ENCODE measurements at regions of chr11 and their contacts with region 1.

Region 1: DNA sequence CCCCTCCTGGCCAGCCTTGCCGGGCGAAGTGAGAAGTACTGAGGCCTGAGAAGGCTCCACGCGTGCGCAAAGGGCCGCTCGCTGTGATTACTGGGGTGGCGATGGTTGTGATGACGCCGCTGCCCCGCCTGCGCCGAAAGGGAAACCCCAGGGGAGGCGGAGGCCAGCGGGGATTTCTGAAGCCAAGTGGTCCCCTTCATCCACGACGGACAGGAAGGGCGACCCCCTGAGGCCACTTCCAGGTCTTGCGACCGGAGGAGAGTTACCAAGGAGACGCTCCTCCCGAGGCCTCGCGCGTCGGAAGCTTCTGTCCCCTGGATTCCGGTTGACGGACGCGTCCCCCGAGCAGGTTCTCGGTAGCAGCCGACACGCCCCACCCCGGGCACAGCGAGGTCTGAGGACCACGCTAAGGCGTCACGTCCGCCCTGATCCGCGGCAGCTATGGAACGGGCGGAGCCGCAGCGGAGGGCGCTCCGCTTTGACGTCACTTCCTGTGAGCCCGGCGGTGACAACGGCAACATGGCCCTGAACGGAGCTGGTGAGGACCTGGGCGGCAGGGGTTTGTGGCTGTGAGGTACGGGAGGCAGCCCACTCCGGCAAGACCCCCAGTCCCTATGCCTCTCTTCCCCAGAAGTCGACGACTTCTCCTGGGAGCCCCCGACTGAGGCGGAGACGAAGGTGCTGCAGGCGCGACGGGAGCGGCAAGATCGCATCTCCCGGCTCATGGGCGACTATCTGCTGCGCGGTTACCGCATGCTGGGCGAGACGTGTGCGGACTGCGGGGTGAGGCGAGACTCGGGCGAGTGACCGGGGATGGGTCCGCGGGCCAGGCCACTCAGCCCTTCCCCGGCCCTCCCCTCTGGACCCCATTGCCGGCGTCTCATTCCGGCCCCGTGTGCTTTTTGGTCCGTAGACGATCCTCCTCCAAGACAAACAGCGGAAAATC is at the start of gene ZNRD2:
- DNase-seq: peak; percentile 99
- H3K4me3 ChIP-seq: peak within 1 kb of the TSS; percentile 60 to 97 (median 91)
- H3K27ac ChIP-seq: peak within 1 kb of the TSS; percentile 81
- H3K4me1 ChIP-seq: peaks cover 56% of the 10 kb centered on the region
- H3K27me3 ChIP-seq: no peaks in the 10 kb centered on the region
- CTCF ChIP-seq: peak; percentile 47 to 48
- total RNA-seq, gene ZNRD2: 35.2 to 52.8 TPM

Region 2: DNA sequence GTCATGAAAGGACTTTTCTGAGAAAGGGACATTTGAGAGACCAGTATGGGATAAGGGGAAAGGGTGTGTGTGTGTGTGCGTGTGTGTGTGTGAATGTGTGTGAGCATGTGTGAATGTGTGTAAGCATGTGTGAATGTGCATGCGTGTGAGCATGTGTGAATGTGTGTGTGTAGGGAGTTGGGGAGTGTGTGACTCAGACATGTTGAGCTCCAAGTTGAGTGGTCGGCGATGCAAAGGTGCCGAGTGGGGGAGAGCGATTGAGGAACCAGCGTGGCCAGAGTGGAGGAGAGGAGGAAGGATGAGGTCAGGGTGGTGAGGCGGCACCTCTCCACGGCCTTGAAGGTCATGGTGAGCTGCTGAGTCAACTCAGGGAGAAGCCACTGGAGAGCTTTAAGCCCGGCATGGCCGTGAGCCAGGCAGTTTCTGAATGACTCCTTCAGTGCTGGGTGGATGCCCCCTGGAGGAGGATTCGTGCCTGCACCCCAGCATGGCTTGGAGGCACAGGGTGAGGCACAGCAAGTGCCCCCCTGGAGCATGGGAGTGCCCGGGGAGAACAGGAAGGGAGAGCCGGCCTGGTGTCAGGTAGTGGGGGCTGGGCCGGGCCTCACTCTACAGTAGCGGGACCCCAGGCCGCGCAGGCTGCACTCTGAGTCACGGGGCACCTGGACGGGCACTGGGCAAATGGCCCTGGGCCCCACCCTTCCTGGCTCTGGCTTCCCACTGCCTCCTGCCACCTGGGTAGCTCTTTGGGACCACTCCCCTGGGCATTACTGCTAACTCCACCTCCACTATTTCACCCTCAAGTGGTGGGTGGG is 1238.5 kb before region 1 on chr11:
- CTCF ChIA-PET with region 1: no interaction called
- dilution Hi-C with region 1: no loop called
- in situ Hi-C with region 1: no loop called
- intact Hi-C with region 1: no loop called
- DNase-seq: peak; percentile 89
- H3K4me3 ChIP-seq: no peak overlapping the region
- H3K27ac ChIP-seq: peak overlapping the region; percentile 35
- H3K4me1 ChIP-seq: peaks cover 24% of the 10 kb centered on the region
- H3K27me3 ChIP-seq: no peaks in the 10 kb centered on the region
- CTCF ChIP-seq: peak; percentile 84 to 95

Region 3: GRCh38 chr11:65354265-65355012 is 215.8 kb before region 1 on chr11 and contains the start of gene TIGD3:
- CTCF ChIA-PET with region 1: no interaction called
- dilution Hi-C with region 1: loop called (anchors 5 kb)
- in situ Hi-C with region 1: no loop called
- intact Hi-C with region 1: no loop called
- DNase-seq: peak; percentile 90
- H3K4me3 ChIP-seq: peak within 1 kb of the TSS; percentile 41 to 72 (median 55)
- H3K27ac ChIP-seq: no peak within 1 kb of the TSS
- H3K4me1 ChIP-seq: peaks cover 15% of the 10 kb centered on the region
- H3K27me3 ChIP-seq: peaks cover 12% of the 10 kb centered on the region
- CTCF ChIP-seq: no peak
- total RNA-seq, gene TIGD3: not detected

Region 4: GRCh38 chr11:65388731-65389130 is 181.5 kb before region 1 on chr11:
- CTCF ChIA-PET with region 1: no interaction called
- dilution Hi-C with region 1: no loop called
- in situ Hi-C with region 1: no loop called
- intact Hi-C with region 1: loop called (anchors 1 kb)
- DNase-seq: peak; percentile 39
- H3K4me3 ChIP-seq: peak overlapping the region; percentile 18 to 32 (median 19)
- H3K27ac ChIP-seq: peak overlapping the region; percentile 20
- H3K4me1 ChIP-seq: peaks cover 63% of the 10 kb centered on the region
- H3K27me3 ChIP-seq: no peaks in the 10 kb centered on the region
- CTCF ChIP-seq: no peak

Region 5: DNA sequence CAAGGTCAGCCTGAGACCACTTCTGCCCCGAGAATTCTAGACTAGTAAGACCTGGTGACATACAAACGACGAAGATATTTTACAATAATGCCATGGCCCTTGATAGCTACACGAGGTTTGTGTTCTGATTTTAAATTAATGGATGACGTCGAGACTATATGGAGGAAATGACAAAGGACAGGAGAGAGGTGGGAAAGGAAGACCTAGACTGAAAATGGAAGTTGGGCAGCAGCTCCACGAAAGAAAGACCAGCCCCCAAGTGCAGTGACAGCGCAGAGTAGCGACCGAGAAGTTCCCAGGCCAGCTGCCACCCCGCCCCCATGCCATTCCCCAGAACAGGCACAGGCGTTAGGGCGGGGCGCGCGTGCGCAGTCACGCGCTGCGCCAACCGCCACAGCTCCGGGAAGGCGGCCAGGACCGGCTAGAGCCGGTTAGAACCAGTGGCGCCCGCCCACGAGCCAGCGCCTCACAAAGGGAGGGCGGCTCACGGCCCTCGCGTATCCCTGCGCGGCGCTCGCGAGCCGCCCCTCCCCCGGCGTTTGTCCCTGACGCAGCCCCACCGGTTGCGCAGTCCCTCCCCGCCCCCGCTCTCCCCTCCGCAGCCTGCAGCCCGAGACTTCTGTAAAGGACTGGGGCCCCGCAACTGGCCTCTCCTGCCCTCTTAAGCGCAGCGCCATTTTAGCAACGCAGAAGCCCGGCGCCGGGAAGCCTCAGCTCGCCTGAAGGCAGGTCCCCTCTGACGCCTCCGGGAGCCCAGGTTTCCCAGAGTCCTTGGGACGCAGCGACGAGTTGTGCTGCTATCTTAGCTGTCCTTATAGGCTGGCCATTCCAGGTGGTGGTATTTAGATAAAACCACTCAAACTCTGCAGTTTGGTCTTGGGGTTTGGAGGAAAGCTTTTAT is 72.9 kb before region 1 on chr11:
- CTCF ChIA-PET with region 1: no interaction called
- dilution Hi-C with region 1: loop called (anchors 5 kb)
- in situ Hi-C with region 1: no loop called
- intact Hi-C with region 1: no loop called
- DNase-seq: peak; percentile 98
- H3K4me3 ChIP-seq: peak overlapping the region; percentile 47 to 99 (median 75)
- H3K27ac ChIP-seq: peak overlapping the region; percentile 98
- H3K4me1 ChIP-seq: peaks cover 48% of the 10 kb centered on the region
- H3K27me3 ChIP-seq: no peaks in the 10 kb centered on the region
- CTCF ChIP-seq: no peak

Region 6: DNA sequence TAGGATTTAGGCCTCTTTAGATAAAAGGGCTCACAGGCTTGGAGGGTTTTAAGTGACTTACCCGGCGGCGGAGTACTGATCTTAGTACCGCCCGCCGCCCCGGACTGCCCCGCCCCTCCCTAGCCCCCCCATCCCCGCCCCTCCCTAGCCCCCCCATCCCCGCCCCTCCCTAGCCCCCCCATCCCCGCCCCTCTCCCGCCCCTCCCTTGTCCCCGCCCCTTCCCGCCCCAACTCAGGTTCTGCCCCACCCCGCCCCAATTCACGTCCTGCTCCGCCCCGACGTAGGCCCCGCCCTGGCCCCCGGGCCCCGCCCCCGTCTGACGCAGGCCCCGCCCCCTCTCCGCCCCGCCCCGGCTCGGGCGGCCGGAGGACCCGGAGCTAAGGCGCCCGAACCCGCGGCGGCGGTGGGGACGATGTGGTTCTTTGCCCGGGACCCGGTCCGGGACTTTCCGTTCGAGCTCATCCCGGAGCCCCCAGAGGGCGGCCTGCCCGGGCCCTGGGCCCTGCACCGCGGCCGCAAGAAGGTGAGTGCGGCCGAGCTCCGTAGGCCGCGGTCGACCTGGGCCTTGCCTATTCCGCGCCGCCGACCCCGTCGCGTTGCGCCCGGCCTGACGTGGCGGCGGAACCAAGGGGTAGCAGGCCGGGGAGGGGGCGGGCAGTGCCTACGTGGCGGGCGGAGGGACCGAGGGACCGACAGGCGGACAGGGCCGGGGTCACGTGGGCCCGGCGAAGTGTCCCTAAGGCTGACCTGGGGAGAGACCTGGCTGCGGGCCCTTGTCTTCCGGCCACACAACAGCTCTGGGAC is 45.3 kb before region 1 on chr11 and contains the start of gene SCYL1:
- CTCF ChIA-PET with region 1: no interaction called
- dilution Hi-C with region 1: no loop called
- in situ Hi-C with region 1: no loop called
- intact Hi-C with region 1: no loop called
- DNase-seq: peak; percentile 60
- H3K4me3 ChIP-seq: peak within 1 kb of the TSS; percentile 77 to 79 (median 79)
- H3K27ac ChIP-seq: peak within 1 kb of the TSS; percentile 40
- H3K4me1 ChIP-seq: peaks cover 14% of the 10 kb centered on the region
- H3K27me3 ChIP-seq: no peaks in the 10 kb centered on the region
- CTCF ChIP-seq: no peak
- total RNA-seq, gene SCYL1: 66.0 to 75.0 TPM

Region 7: DNA sequence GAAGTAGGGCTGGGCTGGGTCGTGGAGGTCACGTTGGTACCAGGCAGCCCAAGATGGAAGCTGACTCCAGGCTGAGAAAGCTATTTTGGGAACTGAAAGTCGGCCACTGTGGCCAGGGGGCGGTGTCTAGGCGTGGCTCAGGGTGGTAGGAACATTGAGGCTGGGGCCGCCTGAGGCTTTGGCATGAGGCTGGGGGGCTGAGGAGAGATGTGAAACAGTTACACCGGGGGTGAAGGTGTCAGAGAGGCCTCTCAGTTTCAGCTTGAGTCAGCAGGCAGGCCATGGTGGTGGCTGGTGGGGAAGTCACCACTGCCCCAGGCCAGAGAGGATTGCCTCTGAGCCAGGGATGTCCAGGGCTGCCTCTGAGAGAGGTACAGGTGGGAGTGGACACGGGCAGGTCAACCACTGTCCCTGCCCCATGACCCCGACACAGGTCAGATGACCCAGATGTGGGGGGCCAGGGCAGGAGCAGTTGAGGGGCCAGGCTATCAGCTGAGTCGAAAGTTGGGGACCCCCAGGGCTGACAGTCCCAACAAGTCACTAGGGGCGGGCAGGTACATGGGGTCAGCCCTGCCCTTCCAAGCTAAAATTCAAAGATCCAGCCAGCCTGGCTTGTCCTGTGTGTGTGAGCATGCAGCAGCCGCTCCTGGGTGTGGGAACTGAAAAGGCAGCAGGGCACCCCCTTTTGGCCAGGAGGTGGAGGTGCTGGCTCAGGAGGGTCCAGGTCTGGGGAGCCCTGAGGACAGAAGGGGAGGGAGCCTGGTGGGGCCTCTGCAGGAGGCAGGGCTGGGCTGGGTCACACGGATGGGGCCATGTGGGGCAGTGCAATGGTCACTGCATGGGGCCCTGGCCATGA is 18.2 kb after region 1 on chr11:
- CTCF ChIA-PET with region 1: interaction called, 14 read pairs
- dilution Hi-C with region 1: no loop called
- in situ Hi-C with region 1: no loop called
- intact Hi-C with region 1: loop called (anchors 1 kb)
- DNase-seq: no peak
- H3K4me3 ChIP-seq: no peak overlapping the region
- H3K27ac ChIP-seq: no peak overlapping the region
- H3K4me1 ChIP-seq: peaks cover 26% of the 10 kb centered on the region
- H3K27me3 ChIP-seq: no peaks in the 10 kb centered on the region
- CTCF ChIP-seq: peak; percentile 67 to 69

Region 8: GRCh38 chr11:65672186-65672860 is 102.1 kb after region 1 on chr11:
- CTCF ChIA-PET with region 1: no interaction called
- dilution Hi-C with region 1: no loop called
- in situ Hi-C with region 1: no loop called
- intact Hi-C with region 1: no loop called
- DNase-seq: no peak
- H3K4me3 ChIP-seq: no peak overlapping the region
- H3K27ac ChIP-seq: no peak overlapping the region
- H3K4me1 ChIP-seq: no peaks in the 10 kb centered on the region
- H3K27me3 ChIP-seq: no peaks in the 10 kb centered on the region
- CTCF ChIP-seq: no peak

Region 9: DNA sequence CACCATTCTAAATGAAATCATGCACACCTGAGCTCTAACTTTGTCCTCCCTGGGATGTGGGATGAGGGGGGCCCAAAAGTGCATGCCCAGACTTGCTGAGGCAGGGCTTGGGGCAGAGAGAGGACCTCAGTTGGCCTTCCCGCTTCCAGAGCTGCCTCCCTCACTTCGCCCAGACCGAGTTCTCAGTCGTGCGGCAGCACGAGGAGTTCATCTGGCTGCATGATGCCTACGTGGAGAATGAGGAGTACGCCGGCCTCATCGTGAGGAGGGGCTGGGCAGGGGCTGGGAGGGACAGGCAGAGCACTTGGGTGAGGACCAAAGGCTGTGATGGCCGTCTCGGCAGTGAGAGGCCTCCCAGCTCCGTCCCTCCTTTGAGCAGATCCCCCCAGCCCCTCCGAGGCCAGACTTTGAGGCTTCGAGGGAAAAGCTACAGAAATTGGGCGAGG is 279.5 kb after region 1 on chr11:
- CTCF ChIA-PET with region 1: no interaction called
- dilution Hi-C with region 1: loop called (anchors 5 kb)
- in situ Hi-C with region 1: no loop called
- intact Hi-C with region 1: no loop called
- DNase-seq: no peak
- H3K4me3 ChIP-seq: no peak overlapping the region
- H3K27ac ChIP-seq: no peak overlapping the region
- H3K4me1 ChIP-seq: peaks cover 4% of the 10 kb centered on the region
- H3K27me3 ChIP-seq: no peaks in the 10 kb centered on the region
- CTCF ChIP-seq: no peak

Measured in mammary epithelial cell (primary cell).